Mammary epithelial cell (primary cell): ENCODE measurements at regions of chr11 and their contacts with region 1.

Region 1: DNA sequence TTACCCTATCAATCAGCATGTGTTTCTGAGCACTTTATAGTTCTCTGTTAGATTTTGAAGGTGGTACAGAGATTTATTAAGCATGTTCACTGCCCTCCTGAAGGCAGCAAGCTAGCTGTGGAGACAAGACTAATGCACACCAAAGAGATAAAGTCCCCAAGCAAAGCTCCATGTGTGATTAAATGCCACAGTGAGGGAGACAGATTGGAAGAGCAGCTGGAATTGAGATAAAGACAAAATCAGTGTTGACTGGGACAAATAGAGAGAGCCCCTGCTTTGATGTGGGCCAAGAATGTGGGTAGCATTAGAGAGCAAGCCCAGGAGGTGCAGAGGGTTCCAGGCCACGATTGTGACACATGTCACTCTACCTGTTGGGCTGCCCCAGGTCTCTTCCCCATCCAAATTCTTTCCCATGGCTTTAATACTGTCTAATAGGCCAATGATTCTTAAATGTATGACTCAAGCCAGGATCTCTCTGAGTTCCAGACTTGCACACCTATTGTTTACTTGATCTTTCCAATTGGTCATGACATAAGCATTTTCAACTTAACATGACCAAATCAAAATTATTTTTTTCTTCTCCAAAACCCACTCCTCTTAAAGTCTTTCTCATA is 60.1 kb upstream of the ZC3H12C start:
- DNase-seq: no peak
- H3K4me3 ChIP-seq: no peak overlapping the region
- H3K27ac ChIP-seq: no peak overlapping the region
- H3K4me1 ChIP-seq: peaks cover 7% of the 10 kb centered on the region
- H3K27me3 ChIP-seq: no peaks in the 10 kb centered on the region
- CTCF ChIP-seq: no peak

Region 2: GRCh38 chr11:109993786-109994185 is 39.3 kb before region 1 on chr11:
- CTCF ChIA-PET with region 1: no interaction called
- dilution Hi-C with region 1: no loop called
- in situ Hi-C with region 1: no loop called
- intact Hi-C with region 1: no loop called
- DNase-seq: no peak
- H3K4me3 ChIP-seq: no peak overlapping the region
- H3K27ac ChIP-seq: no peak overlapping the region
- H3K4me1 ChIP-seq: no peaks in the 10 kb centered on the region
- H3K27me3 ChIP-seq: no peaks in the 10 kb centered on the region
- CTCF ChIP-seq: no peak

Region 3: GRCh38 chr11:110349138-110349996 is 316.3 kb after region 1 on chr11:
- CTCF ChIA-PET with region 1: interaction called, 13 read pairs
- dilution Hi-C with region 1: no loop called
- in situ Hi-C with region 1: no loop called
- intact Hi-C with region 1: no loop called
- DNase-seq: peak; percentile 94
- H3K4me3 ChIP-seq: no peak overlapping the region
- H3K27ac ChIP-seq: peak overlapping the region; percentile 36
- H3K4me1 ChIP-seq: peaks cover 11% of the 10 kb centered on the region
- H3K27me3 ChIP-seq: no peaks in the 10 kb centered on the region
- CTCF ChIP-seq: no peak